BJ (cell line): ENCODE measurements at regions of chr21 and their contacts with region 1.

Region 1: GRCh38 chr21:33199516-33200217 is 30.1 kb upstream of the IFNAR2 start:
- DNase-seq: peak; percentile 63
- H3K4me3 ChIP-seq: no peak overlapping the region
- H3K27me3 ChIP-seq: peaks cover 3% of the 10 kb centered on the region; the same call in 1 of the 2 replicates
- CTCF ChIP-seq: peak; percentile 77

Region 2: GRCh38 chr21:32826329-32827167 is 373.1 kb before region 1 on chr21:
- CTCF ChIA-PET with region 1: interaction called, 10 read pairs
- POLR2A ChIA-PET with region 1: no interaction called
- DNase-seq: no peak
- H3K4me3 ChIP-seq: no peak overlapping the region
- H3K27me3 ChIP-seq: no peaks in the 10 kb centered on the region
- CTCF ChIP-seq: peak; percentile 66

Region 3: GRCh38 chr21:32940079-32941014 is 259.3 kb before region 1 on chr21:
- CTCF ChIA-PET with region 1: interaction called, 21 read pairs
- POLR2A ChIA-PET with region 1: no interaction called
- DNase-seq: no peak
- H3K4me3 ChIP-seq: no peak overlapping the region
- H3K27me3 ChIP-seq: no peaks in the 10 kb centered on the region
- CTCF ChIP-seq: peak; percentile 82

Region 4: GRCh38 chr21:32994305-32994704 is 205.4 kb before region 1 on chr21:
- CTCF ChIA-PET with region 1: interaction called, 23 read pairs
- POLR2A ChIA-PET with region 1: no interaction called
- DNase-seq: no peak
- H3K4me3 ChIP-seq: no peak overlapping the region
- H3K27me3 ChIP-seq: peaks cover 5% of the 10 kb centered on the region
- CTCF ChIP-seq: peak; percentile 56

Region 5: DNA sequence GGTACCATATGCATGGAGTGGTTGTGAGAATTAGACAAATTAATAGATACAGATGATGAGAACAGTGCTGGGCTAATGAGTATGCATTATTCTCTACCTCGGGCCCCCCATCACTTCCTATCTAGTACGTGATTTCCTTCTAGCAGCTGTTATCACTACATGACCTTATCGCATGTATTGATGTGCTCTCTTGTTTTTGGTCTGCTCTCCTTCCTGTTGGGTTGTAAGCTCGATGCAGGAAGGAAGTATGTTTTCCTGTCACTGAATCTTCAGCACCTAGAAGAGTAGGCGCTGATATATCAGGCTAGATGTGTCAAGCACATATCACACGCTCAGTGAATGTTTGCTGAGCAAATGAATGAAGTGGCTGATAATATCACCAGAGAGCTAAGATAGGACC is 13.8 kb before region 1 on chr21:
- CTCF ChIA-PET with region 1: interaction called, 22 read pairs
- POLR2A ChIA-PET with region 1: no interaction called
- DNase-seq: no peak
- H3K4me3 ChIP-seq: no peak overlapping the region
- H3K27me3 ChIP-seq: peaks cover 12% of the 10 kb centered on the region
- CTCF ChIP-seq: no peak

Region 6: GRCh38 chr21:33441489-33442477 is 242.1 kb after region 1 on chr21:
- CTCF ChIA-PET with region 1: interaction called, 44 read pairs
- POLR2A ChIA-PET with region 1: no interaction called
- DNase-seq: peak; percentile 53
- H3K4me3 ChIP-seq: no peak overlapping the region
- H3K27me3 ChIP-seq: no peaks in the 10 kb centered on the region
- CTCF ChIP-seq: no peak